GM12878 (cell line): ENCODE measurements at regions of chr15 and their contacts with region 1.

Region 1: DNA sequence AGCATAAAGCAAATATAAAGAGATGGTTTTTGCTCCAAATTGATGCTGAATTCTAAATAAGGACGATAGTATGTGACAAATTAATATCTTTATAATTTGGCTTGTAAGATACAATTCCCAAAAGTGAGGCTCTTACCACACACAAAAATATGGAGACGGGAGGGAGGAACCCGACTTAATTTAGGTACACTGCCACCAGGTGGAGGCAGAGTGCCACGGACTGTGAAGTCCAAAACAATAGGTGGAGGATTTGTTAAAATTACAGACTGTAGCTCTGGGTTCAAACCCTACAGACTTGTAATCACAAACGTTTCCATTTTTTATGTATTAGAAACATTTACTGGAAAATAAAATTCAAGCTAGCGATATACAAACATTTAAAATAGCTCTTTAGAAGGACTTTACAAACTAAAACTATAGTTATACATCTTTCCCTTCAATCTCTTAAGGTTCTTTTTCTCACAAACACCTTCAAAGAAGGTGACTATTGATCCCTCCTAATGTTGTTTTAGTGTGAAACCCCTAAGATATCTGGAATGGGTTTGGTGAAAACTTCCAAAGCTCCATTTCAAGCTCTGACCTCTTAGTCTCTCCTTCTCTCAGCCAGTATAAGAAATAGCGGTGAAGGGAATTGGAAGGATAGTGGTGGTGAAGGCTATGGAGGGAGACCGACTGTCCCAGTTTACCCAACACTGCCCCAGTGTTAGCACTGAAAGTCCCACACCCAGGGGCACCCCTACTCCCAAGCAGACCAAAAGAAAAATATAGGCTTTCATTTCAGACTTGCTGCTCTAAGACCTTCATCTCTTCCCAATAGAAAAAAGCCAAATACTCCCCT is 89.7 kb downstream of the AQP9 start:
- DNase-seq: peak; percentile 37
- ATAC-seq: peak; percentile 85
- H3K4me3 ChIP-seq: no peak overlapping the region
- H3K27ac ChIP-seq: no peak overlapping the region
- H3K4me1 ChIP-seq: no peaks in the 10 kb centered on the region
- H3K27me3 ChIP-seq: no peaks in the 10 kb centered on the region; a peak in 1 of 4 replicates
- CTCF ChIP-seq: peak; percentile 69 to 94 (median 85); a peak in 5 of 6 replicates
- EP300 ChIP-seq: no peak
- POLR2A ChIP-seq: no peak
- RAD21 ChIP-seq: peak; percentile 97

Region 2: GRCh38 chr15:58043192-58043903 is 184.6 kb before region 1 on chr15:
- CTCF ChIA-PET with region 1: no interaction called
- POLR2A ChIA-PET with region 1: no interaction called
- RAD21 ChIA-PET with region 1: no interaction called
- SMC1A ChIA-PET with region 1: no interaction called
- in situ Hi-C with region 1: no loop called
- intact Hi-C with region 1: no loop called
- DNase-seq: no peak
- ATAC-seq: peak; percentile 76
- H3K4me3 ChIP-seq: no peak overlapping the region
- H3K27ac ChIP-seq: no peak overlapping the region
- H3K4me1 ChIP-seq: no peaks in the 10 kb centered on the region
- H3K27me3 ChIP-seq: no peaks in the 10 kb centered on the region; a peak in 2 of 4 replicates
- CTCF ChIP-seq: peak; percentile 62 to 74 (median 68)
- EP300 ChIP-seq: no peak
- POLR2A ChIP-seq: no peak
- RAD21 ChIP-seq: peak; percentile 48

Region 3: GRCh38 chr15:58269455-58270414 is 41.8 kb after region 1 on chr15:
- CTCF ChIA-PET with region 1: interaction called, 12 read pairs
- POLR2A ChIA-PET with region 1: interaction called, 11 read pairs
- RAD21 ChIA-PET with region 1: interaction called, 4 read pairs
- SMC1A ChIA-PET with region 1: interaction called, 5 read pairs
- in situ Hi-C with region 1: no loop called
- intact Hi-C with region 1: no loop called
- DNase-seq: peak; percentile 17
- ATAC-seq: peak; percentile 81
- H3K4me3 ChIP-seq: no peak overlapping the region
- H3K27ac ChIP-seq: no peak overlapping the region
- H3K4me1 ChIP-seq: no peaks in the 10 kb centered on the region
- H3K27me3 ChIP-seq: no peaks in the 10 kb centered on the region
- CTCF ChIP-seq: peak; percentile 59 to 69 (median 65)
- EP300 ChIP-seq: no peak
- POLR2A ChIP-seq: no peak
- RAD21 ChIP-seq: peak; percentile 90

Region 4: DNA sequence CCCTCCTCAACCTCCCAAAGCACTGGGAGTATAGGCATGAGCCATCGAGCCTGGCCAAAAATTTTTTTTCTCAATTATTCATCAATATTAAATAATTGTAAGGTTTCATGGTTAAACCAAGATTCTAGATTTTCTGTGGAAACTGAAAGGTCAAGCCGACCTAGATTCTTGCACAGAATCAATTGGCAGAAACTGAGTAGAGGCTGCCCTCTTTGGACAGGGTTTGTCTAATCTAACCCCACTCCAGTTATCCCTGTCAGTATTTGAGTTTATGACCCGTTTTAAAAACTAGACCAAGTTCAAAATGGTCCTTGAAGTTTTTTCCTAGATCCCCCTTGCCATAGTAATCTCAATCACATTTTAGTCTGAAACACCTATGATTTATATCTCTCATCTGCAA is 530.2 kb after region 1 on chr15:
- CTCF ChIA-PET with region 1: interaction called, 30 read pairs
- POLR2A ChIA-PET with region 1: no interaction called
- RAD21 ChIA-PET with region 1: interaction called, 23 read pairs
- SMC1A ChIA-PET with region 1: interaction called, 11 read pairs
- in situ Hi-C with region 1: no loop called
- intact Hi-C with region 1: no loop called
- DNase-seq: no peak
- ATAC-seq: peak; percentile 72
- H3K4me3 ChIP-seq: no peak overlapping the region
- H3K27ac ChIP-seq: no peak overlapping the region
- H3K4me1 ChIP-seq: no peaks in the 10 kb centered on the region
- H3K27me3 ChIP-seq: no peaks in the 10 kb centered on the region
- CTCF ChIP-seq: peak; percentile 36 to 65 (median 44); a peak in 5 of 6 replicates
- EP300 ChIP-seq: no peak
- POLR2A ChIP-seq: no peak
- RAD21 ChIP-seq: peak; percentile 72

Region 5: GRCh38 chr15:58898150-58898680 is 670.3 kb after region 1 on chr15:
- CTCF ChIA-PET with region 1: no interaction called
- POLR2A ChIA-PET with region 1: no interaction called
- RAD21 ChIA-PET with region 1: no interaction called
- SMC1A ChIA-PET with region 1: no interaction called
- in situ Hi-C with region 1: no loop called
- intact Hi-C with region 1: loop called (anchors 10 kb)
- DNase-seq: no peak
- ATAC-seq: no peak; the same call in 2 of the 3 replicates
- H3K4me3 ChIP-seq: no peak overlapping the region
- H3K27ac ChIP-seq: no peak overlapping the region
- H3K4me1 ChIP-seq: peaks cover 3% of the 10 kb centered on the region; the same call in 1 of the 2 replicates
- H3K27me3 ChIP-seq: no peaks in the 10 kb centered on the region
- CTCF ChIP-seq: no peak
- EP300 ChIP-seq: no peak
- POLR2A ChIP-seq: no peak
- RAD21 ChIP-seq: no peak

Region 6: DNA sequence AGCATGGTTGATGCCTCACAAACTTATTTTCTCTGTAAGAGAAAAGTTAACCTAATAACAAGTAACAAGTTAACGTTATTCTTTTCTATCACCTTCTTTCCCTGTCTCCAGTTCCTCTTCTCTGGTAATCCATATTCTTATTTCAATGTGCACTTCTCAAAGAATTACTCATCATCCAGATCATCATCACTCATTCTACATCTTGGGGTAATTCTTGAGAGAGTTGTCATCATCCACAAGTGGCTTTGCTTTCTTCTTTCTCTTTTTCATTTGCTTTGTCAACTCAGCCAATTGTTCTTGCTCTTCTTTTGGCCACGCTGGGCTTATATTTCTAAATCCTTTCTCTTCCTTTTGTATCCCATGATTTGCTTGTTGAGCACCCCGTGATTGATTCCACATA is 738.8 kb after region 1 on chr15:
- CTCF ChIA-PET with region 1: interaction called, 3 read pairs
- POLR2A ChIA-PET with region 1: no interaction called
- RAD21 ChIA-PET with region 1: no interaction called
- SMC1A ChIA-PET with region 1: no interaction called
- in situ Hi-C with region 1: no loop called
- intact Hi-C with region 1: loop called (anchors 5 kb)
- DNase-seq: no peak
- ATAC-seq: no peak
- H3K4me3 ChIP-seq: no peak overlapping the region
- H3K27ac ChIP-seq: no peak overlapping the region
- H3K4me1 ChIP-seq: no peaks in the 10 kb centered on the region; the same call in 1 of the 2 replicates
- H3K27me3 ChIP-seq: no peaks in the 10 kb centered on the region
- CTCF ChIP-seq: no peak
- EP300 ChIP-seq: no peak
- POLR2A ChIP-seq: no peak
- RAD21 ChIP-seq: no peak